Heart right ventricle (tissue), 16 donors: ENCODE measurements at regions of chr3 and their contacts with region 1.

Region 1: GRCh38 chr3:17444865-17445264 is 297.6 kb downstream of the TBC1D5 start:
- DNase-seq: no peak
- ATAC-seq: no peak
- H3K4me3 ChIP-seq: no peak overlapping the region
- H3K27ac ChIP-seq: no peak overlapping the region
- H3K4me1 ChIP-seq: peaks cover 0 to 4% (median 0%) of the 10 kb centered on the region in 9 donors
- H3K27me3 ChIP-seq: no peaks in the 10 kb centered on the region
- CTCF ChIP-seq: no peak

Region 2: DNA sequence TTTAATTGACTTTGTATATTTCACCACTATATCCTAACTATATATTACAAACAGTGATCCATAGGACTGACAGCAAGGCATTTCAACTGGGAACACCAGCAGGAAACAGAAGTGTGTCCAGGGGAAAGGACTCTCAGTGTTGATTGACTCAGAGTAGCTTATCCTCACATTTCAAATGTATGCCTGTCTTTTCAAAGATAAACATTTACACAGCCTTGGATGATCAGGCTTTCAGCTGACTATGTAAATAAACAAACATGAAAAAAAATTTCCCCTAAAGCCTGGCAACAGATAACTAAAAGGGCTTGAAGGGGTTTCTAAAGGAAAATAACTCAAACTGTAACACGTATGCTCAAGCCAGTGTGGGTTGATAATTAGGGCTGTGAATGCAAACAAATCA is 24.2 kb before region 1 on chr3:
- intact Hi-C with region 1: loop called in 1 of 10 experiments (anchors 2 kb)
- DNase-seq: no peak
- ATAC-seq: no peak
- H3K4me3 ChIP-seq: no peak overlapping the region
- H3K27ac ChIP-seq: no peak overlapping the region
- H3K4me1 ChIP-seq: peaks cover 0 to 11% (median 0%) of the 10 kb centered on the region in 9 donors
- H3K27me3 ChIP-seq: no peaks in the 10 kb centered on the region
- CTCF ChIP-seq: no peak